ENCODE measurements at regions of chr12 and their contacts with region 1.

Region 1: DNA sequence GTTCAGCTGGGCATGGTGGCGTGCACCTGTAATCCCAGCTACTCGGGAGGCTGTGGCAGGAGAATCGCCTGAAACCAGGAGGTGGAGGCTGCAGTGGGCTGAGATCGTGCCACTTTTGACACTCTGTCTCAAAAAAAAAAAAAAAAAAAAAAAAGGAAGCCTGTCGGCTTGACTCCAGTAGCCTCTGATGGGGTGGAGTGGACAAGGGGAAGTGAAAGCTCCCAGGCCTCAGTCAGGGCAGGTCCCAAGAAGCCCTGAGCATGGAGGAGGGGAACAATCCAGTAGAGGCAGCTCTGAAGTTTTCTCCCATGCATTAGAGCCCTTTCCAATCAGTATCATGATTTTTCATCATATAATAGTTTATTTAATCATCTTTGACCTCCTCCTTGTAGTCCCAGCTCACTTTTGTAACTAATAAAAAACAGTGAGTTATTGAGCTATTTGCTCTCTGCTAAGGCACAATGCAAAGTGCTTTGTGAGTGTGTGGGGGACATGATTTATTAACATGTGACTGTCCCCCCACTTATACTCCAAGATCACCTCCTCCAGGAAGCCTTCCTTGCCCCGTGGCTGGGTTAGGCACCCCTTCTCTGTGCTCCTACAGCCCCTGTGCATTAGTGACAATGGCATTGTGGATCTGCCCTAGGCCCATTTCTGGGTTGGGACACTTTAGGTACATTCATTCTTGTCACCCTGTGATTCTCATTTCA is 4.7 kb upstream of the SSH1 start:
- DNase-seq: no peak

Region 2: DNA sequence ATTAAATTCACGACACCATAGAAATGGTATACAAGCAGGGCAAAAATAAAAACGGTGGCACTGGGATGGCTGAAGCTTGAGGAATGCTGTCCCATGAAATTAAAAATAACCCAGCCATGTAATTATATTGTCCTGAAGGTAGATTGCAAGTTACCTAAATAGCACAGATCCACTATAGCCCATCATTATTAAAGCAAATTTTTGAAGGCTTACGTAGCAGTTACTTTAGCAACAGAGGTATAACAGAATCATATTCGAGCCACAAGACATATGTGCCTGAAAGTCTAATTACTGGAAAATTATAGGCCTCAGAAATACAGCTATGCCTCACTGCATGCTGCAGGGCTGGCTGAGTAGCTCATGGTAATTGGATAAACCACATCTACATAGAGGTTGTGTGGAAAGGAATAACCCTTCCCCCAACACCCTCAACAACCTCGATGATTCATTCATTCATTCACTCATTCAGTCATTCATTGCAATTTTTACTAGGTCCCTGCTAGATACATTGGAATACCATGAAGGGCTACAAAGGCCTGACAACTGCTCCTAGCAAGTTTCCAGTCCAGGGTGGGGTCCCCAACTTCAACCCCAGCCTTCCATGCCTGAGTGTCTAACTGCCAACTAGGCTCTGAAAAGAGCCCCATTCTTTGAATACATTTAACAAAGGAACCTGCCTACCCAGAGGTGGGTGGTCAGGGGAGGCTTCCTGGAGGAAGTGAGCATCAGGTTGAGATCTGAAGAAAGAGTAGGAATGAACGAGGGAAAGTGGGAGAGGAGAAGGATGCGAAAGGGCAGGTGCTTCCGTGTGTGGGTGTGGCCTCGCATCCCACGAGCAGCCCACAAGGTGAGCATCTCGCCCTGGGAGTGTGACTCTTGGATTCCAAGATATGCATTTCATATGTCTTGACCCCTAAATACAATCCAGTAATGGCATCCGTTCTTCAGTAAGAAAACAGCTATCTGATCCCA is 504.9 kb before region 1 on chr12:
- intact Hi-C with region 1: loop called in 1 of 2 experiments (anchors 10 kb)
- DNase-seq: no peak